H1 (cell line): ENCODE measurements at regions of chrX and their contacts with region 1.

Region 1: GRCh38 chrX:134158821-134159512 is 78.0 kb upstream of the CCDC160 start:
- DNase-seq: no peak
- H3K4me3 ChIP-seq: no peak overlapping the region
- H3K27ac ChIP-seq: no peak overlapping the region
- H3K4me1 ChIP-seq: no peaks in the 10 kb centered on the region
- H3K27me3 ChIP-seq: no peaks in the 10 kb centered on the region
- CTCF ChIP-seq: no peak
- EP300 ChIP-seq: no peak
- POLR2A ChIP-seq: no peak
- RAD21 ChIP-seq: no peak

Region 2: GRCh38 chrX:133980406-133981186 is 178.4 kb before region 1 on chrX:
- CTCF ChIA-PET with region 1: no interaction called
- POLR2A ChIA-PET with region 1: no interaction called
- DNase-seq: no peak
- H3K4me3 ChIP-seq: no peak overlapping the region
- H3K27ac ChIP-seq: no peak overlapping the region
- H3K4me1 ChIP-seq: peaks cover 1 to 19% (median 13%) of the 10 kb centered on the region in 4 experiments; a peak in 4 of 7 replicates
- H3K27me3 ChIP-seq: peaks cover 0 to 3% (median 0%) of the 10 kb centered on the region in 4 experiments; a peak in 2 of 7 replicates
- CTCF ChIP-seq: no peak
- EP300 ChIP-seq: no peak
- POLR2A ChIP-seq: no peak
- RAD21 ChIP-seq: no peak

Region 3: DNA sequence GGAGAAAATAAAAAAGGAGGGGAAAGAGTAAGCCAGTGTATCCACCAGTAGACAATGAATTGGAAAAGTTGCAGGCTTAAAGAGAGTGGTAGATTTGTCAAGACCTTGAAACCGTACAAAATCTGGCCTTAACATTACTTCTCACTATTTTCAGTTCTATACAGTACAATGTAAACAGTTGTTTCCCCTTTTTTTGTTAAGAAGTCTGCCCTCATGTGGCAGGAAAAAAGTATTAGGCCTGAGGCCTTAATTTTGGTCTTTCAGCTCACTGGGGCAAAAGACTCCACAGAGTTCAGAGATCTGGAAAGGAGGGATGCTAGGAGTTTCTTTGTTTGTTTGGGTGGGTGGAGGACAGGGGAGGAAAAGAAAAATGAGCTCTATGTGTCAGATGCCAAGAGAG is 14.7 kb before region 1 on chrX:
- CTCF ChIA-PET with region 1: interaction called, 10 read pairs
- POLR2A ChIA-PET with region 1: no interaction called
- DNase-seq: no peak
- H3K4me3 ChIP-seq: no peak overlapping the region
- H3K27ac ChIP-seq: no peak overlapping the region
- H3K4me1 ChIP-seq: no peaks in the 10 kb centered on the region
- H3K27me3 ChIP-seq: no peaks in the 10 kb centered on the region
- CTCF ChIP-seq: peak in 2 of 3 experiments; percentile 24 to 32; a peak in 2 of 4 replicates
- EP300 ChIP-seq: no peak
- POLR2A ChIP-seq: no peak
- RAD21 ChIP-seq: peak in 1 of 2 experiments; percentile 42; a peak in 2 of 4 replicates

Region 4: GRCh38 chrX:134171661-134172587 is 13.0 kb after region 1 on chrX:
- CTCF ChIA-PET with region 1: interaction called, 3 read pairs
- POLR2A ChIA-PET with region 1: interaction called, 13 read pairs
- DNase-seq: no peak
- H3K4me3 ChIP-seq: peak overlapping the region; percentile 71 to 100 (median 80)
- H3K27ac ChIP-seq: peak overlapping the region; percentile 73; the same call in 1 of the 2 replicates
- H3K4me1 ChIP-seq: peaks cover 0 to 13% (median 5%) of the 10 kb centered on the region in 4 experiments; a peak in 4 of 7 replicates
- H3K27me3 ChIP-seq: no peaks in the 10 kb centered on the region
- CTCF ChIP-seq: no peak
- EP300 ChIP-seq: no peak
- POLR2A ChIP-seq: peak in 1 of 2 experiments; percentile 19; a peak in 1 of 3 replicates
- RAD21 ChIP-seq: no peak

Region 5: GRCh38 chrX:134622056-134622812 is 463.3 kb after region 1 on chrX:
- CTCF ChIA-PET with region 1: no interaction called
- POLR2A ChIA-PET with region 1: no interaction called
- DNase-seq: peak in 1 of 2 experiments; percentile 39
- H3K4me3 ChIP-seq: no peak overlapping the region
- H3K27ac ChIP-seq: no peak overlapping the region
- H3K4me1 ChIP-seq: peaks cover 0 to 7% (median 0%) of the 10 kb centered on the region in 4 experiments; a peak in 2 of 7 replicates
- H3K27me3 ChIP-seq: no peaks in the 10 kb centered on the region
- CTCF ChIP-seq: no peak
- EP300 ChIP-seq: no peak
- POLR2A ChIP-seq: no peak
- RAD21 ChIP-seq: no peak